Mammary epithelial cell (primary cell): ENCODE measurements at regions of chr11 and their contacts with region 1.

Region 1: DNA sequence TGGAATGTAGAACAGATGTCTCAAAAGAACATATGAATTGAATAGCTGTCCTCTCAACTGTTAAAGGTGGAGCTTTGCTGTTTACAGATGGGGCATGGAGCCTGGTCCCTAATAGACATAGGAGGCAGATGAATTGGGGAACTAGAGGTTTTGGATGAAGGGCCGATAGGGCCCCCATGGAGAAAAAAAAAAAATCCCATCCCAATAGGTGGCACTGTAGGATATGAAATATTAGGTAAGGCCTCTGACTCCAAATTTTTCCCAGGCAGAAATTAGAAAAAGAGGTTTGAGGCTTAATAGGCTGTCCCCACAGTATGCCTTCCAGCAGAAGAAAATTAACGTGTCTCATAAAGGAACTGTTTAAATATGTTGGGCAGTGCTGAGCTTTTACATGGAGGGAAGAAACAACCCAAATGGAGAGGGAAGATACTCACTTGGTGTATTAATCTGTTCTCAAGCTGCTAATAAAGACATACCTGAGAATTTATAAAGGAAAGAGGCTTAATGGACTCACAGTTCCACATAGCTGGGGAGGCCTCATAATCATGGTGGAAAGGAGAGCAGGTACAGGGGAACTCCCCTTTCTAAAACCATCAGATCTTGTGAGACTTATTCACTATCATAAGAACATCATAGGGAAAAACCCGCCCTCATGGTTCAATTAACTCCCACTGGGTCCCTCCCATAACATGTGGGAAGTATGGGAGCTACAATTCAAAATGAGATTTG is 30.1 kb upstream of the TMEM45B start:
- DNase-seq: peak; percentile 31
- H3K4me3 ChIP-seq: no peak overlapping the region
- H3K27ac ChIP-seq: no peak overlapping the region
- H3K4me1 ChIP-seq: peaks cover 18% of the 10 kb centered on the region
- H3K27me3 ChIP-seq: no peaks in the 10 kb centered on the region
- CTCF ChIP-seq: peak; percentile 32 to 62

Region 2: DNA sequence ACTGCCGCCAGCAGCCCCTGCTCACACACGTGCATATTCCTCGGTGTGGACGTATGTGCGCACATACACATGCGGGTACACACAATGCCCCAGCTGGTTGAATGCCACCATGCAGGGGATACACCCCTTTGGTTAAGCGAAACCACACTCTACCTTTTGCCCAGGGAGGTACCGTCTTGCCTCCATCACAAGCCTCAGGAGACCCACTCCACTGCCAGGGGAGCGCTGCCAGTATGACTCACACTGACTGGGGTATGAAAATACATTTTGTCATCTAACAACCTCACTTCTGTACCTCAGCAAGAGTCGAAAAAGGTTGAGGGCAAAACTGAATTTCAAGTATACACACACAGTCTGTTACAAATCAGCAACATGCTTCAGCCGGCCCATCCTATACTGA is 69.5 kb after region 1 on chr11:
- CTCF ChIA-PET with region 1: no interaction called
- dilution Hi-C with region 1: loop called (anchors 5 kb)
- in situ Hi-C with region 1: no loop called
- intact Hi-C with region 1: no loop called
- DNase-seq: no peak
- H3K4me3 ChIP-seq: no peak overlapping the region
- H3K27ac ChIP-seq: no peak overlapping the region
- H3K4me1 ChIP-seq: peaks cover 17% of the 10 kb centered on the region
- H3K27me3 ChIP-seq: no peaks in the 10 kb centered on the region
- CTCF ChIP-seq: no peak

Region 3: DNA sequence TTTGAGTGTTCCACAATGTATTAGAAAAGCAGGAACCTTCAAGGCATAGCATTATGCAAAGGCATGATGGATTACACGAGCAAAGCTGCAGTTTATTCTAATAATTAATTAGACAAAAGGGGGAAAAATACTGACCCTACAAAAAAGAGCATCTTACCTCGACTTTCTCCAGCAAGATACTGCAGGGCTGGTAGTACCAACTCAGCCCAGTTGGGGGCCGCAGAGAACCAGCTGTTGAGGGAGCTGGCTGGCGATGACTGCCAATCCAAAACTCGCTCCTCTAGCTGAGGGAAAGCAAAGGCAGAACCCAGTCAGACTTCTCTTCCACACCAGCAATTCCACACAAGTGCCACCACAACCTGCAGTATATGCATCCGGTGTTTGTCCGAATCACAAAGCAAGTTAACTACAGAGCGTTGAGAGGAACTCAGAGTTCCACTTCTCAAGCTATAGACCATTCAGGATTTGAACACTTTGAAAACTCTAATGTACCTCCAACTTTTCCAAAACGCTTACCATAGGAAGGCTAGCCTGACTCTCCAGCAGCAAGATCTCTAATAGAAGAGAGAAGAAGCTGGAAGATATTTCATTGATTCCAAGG is 96.1 kb after region 1 on chr11:
- CTCF ChIA-PET with region 1: no interaction called
- dilution Hi-C with region 1: no loop called
- in situ Hi-C with region 1: loop called (anchors 5 to 25 kb)
- intact Hi-C with region 1: no loop called
- DNase-seq: peak; percentile 17
- H3K4me3 ChIP-seq: no peak overlapping the region
- H3K27ac ChIP-seq: no peak overlapping the region
- H3K4me1 ChIP-seq: no peaks in the 10 kb centered on the region
- H3K27me3 ChIP-seq: no peaks in the 10 kb centered on the region
- CTCF ChIP-seq: peak; percentile 59 to 73

Region 4: GRCh38 chr11:130002846-130003716 is 217.5 kb after region 1 on chr11:
- CTCF ChIA-PET with region 1: no interaction called
- dilution Hi-C with region 1: no loop called
- in situ Hi-C with region 1: no loop called
- intact Hi-C with region 1: loop called (anchors 2 kb)
- DNase-seq: peak; percentile 95
- H3K4me3 ChIP-seq: peak overlapping the region; percentile 70 to 95 (median 79)
- H3K27ac ChIP-seq: peak overlapping the region; percentile 100
- H3K4me1 ChIP-seq: peaks cover 18% of the 10 kb centered on the region
- H3K27me3 ChIP-seq: no peaks in the 10 kb centered on the region
- CTCF ChIP-seq: no peak

Region 5: DNA sequence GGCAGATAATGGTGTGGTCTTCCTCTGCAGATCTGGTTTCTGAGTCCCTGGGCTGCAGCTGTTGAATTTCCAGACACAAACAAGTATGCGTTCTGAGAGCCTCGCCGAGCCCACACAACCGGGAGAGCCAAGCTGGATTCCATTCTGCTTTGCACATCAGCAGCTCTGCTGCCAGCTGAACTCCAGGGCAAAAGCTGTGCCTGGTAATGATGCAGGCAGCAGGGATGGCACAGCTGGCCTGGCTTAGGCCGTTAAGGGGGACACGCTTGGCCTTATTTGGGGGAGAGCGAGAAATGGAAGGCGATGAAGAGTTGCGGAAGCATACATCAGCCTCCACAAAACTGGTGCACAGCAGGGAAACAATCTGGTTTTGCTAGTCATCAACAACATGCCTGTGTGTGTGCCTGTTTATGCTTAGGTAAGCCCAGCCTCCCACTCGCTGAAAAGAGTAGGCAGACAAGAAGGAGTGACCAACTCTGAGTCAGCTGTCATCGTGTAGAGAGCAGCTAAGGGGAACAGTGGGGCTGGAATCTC is 617.8 kb after region 1 on chr11:
- CTCF ChIA-PET with region 1: no interaction called
- dilution Hi-C with region 1: no loop called
- in situ Hi-C with region 1: loop called in 1 of 2 experiments (anchors 25 kb)
- intact Hi-C with region 1: no loop called
- DNase-seq: peak; percentile 89
- H3K4me3 ChIP-seq: peak overlapping the region in 2 of 3 experiments; percentile 14 to 17
- H3K27ac ChIP-seq: no peak overlapping the region
- H3K4me1 ChIP-seq: peaks cover 31% of the 10 kb centered on the region
- H3K27me3 ChIP-seq: no peaks in the 10 kb centered on the region
- CTCF ChIP-seq: no peak